ENCODE measurements at regions of chr3 and their contacts with region 1.

Region 1: GRCh38 chr3:9932843-9933560 is 632 bp upstream of the CRELD1 start:
- DNase-seq: peak; percentile 87
- H3K4me3 ChIP-seq: peak overlapping the region; percentile 71
- H3K27ac ChIP-seq: peak overlapping the region; percentile 76
- H3K4me1 ChIP-seq: peaks cover 22% of the 10 kb centered on the region
- CTCF ChIP-seq: peak; percentile 85

Region 2: GRCh38 chr3:9749645-9750555 is 183.1 kb before region 1 on chr3 and contains the start of gene OGG1:
- CTCF ChIA-PET with region 1: no interaction called
- POLR2A ChIA-PET with region 1: interaction called, 3 read pairs
- intact Hi-C with region 1: loop called (anchors 5 kb)
- DNase-seq: peak; percentile 99
- H3K4me3 ChIP-seq: peak within 1 kb of the TSS; percentile 81
- H3K27ac ChIP-seq: peak within 1 kb of the TSS; percentile 88
- H3K4me1 ChIP-seq: peaks cover 40% of the 10 kb centered on the region
- CTCF ChIP-seq: no peak
- total RNA-seq, gene OGG1: 98.9 and 121 TPM in 2 replicates

Region 3: DNA sequence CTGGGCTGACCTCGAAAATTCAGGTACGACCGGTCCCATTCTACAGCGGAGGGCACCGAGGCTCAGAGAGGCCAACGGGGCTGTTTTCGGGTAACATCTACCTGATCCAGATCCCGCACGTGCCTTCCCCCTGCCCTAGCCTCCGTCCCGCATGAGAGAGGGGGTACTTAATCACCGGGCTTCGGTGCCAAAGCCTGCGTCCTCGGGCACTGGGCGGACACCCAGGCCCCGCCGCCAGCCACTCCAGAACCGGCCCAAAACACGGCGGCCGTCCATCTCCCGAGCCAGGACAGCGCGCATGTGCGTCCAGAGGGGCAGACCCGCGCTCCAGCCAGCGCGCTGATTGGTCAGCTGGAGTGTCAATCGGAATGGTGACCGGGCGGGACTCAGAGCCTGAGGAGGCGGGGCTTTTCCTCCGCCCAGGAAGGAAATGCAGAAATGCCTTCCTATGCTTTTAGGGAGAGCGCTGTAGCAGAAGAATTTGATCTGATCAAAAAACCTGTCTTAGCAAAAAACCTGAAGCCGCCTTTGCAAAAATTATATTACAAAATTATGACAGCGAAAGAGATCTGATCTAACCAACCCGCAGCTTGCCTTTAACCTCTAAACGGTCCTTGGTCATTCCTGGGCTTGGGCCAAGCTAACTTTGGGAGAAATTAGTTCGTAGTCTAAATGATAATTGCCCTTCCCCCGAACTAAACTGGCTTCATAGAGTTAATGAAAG is 89.1 kb before region 1 on chr3 and contains the start of gene RPUSD3:
- CTCF ChIA-PET with region 1: interaction called, 3 read pairs
- POLR2A ChIA-PET with region 1: interaction called, 3 read pairs
- intact Hi-C with region 1: loop called (anchors 5 kb)
- DNase-seq: peak; percentile 95
- H3K4me3 ChIP-seq: peak within 1 kb of the TSS; percentile 85
- H3K27ac ChIP-seq: peak within 1 kb of the TSS; percentile 15
- H3K4me1 ChIP-seq: peaks cover 16% of the 10 kb centered on the region
- CTCF ChIP-seq: no peak
- total RNA-seq, gene RPUSD3: 44.2 and 47.4 TPM in 2 replicates

Region 4: DNA sequence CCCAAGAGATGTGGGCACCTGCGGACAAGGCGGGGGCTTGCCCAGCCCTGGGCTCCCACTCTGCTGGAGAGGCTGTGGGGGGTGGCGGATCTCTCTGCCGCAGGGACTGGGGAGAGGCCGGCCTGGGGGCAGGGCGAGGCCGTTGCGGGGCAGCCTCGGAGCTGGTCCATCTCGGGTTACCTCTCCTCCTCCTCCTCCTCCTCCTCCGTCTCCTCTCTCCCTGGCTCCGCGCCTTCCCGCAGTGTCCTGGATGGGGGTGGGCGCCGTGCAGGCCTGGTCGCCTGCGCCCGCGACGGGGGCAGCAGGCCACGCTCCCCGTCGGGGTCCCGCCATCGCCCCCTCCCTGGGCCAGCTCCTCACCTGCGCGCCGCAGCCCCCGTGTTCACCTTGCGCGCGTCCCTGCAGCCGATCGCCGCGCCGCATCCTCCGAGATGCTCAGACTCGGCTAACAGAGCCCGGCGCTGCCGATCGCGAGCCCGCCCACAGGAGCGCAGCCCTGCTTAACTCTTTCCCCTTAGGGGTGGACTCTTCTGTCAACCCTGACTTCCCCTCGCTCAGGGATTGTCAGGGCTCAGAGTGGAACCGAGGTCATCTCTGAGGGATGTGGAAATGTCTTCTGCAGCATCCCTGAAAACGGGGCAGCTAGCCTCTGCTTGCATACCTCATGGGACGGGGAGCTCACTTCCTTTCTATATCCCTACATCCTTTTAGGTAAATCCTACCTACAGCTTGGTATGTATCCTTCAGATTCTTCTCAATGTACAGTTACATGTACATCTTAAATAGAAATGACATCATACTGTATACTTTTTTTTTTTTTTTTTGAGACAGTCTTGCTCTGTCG is 19.2 kb after region 1 on chr3 and contains the start of gene PRRT3:
- CTCF ChIA-PET with region 1: interaction called, 4 read pairs
- POLR2A ChIA-PET with region 1: interaction called, 5 read pairs
- intact Hi-C with region 1: loop called (anchors 1 kb)
- DNase-seq: peak; percentile 75
- H3K4me3 ChIP-seq: peak within 1 kb of the TSS; percentile 81
- H3K27ac ChIP-seq: no peak within 1 kb of the TSS
- H3K4me1 ChIP-seq: peaks cover 12% of the 10 kb centered on the region
- CTCF ChIP-seq: no peak
- total RNA-seq, gene PRRT3: 1.4 and 2.1 TPM in 2 replicates

Region 5: DNA sequence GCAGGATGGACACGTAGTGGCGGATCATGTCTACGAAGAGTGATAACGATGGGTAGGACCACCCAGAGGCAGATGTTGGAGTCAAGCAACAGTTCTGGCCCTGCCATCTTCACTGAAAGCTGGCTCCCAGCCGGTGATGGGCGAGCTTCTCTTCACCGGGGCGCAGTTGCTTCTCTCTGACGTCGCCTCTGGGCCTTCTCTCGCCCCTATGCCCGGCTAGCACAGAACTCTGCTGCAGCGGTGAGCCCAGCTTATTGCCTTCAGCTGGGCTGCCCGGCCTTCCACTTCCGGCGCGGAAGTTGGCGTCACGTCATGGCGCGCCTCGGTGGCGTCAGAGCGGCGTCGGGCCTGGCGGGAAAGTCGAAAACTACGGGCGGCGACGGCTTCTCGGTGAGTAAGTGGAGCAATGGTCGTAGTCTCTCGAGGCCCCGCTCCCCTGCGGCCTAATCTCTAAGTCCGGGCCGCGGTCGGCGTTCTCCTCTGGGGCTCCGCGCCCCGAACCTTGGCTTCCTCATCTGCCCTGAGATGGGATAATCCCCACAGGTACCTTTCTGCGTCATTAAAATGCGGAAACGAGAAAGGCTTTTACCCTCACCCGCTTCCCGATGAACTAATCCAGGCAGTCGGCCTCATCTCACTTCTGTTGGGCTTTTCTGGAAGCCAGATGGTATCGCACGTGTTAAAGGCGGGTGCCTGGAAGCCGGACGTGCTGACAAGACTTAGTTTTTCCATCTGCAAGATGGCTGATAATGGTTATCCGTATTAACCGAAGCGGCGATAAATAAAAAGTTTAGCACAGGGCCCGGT is 93.3 kb after region 1 on chr3 and contains the start of gene FANCD2:
- CTCF ChIA-PET with region 1: no interaction called
- POLR2A ChIA-PET with region 1: no interaction called
- intact Hi-C with region 1: loop called (anchors 2 kb)
- DNase-seq: peak; percentile 90
- H3K4me3 ChIP-seq: peak within 1 kb of the TSS; percentile 98
- H3K27ac ChIP-seq: peak within 1 kb of the TSS; percentile 82
- H3K4me1 ChIP-seq: peaks cover 22% of the 10 kb centered on the region
- CTCF ChIP-seq: no peak
- total RNA-seq, gene FANCD2: 112 and 116 TPM in 2 replicates